AG04449 (cell line): ENCODE measurements at regions of chr19 and their contacts with region 1.

Region 1: GRCh38 chr19:16062789-16063188 is 13.5 kb upstream of the TPM4 start:
- DNase-seq: no peak
- H3K4me3 ChIP-seq: no peak overlapping the region
- CTCF ChIP-seq: peak; percentile 84

Region 2: DNA sequence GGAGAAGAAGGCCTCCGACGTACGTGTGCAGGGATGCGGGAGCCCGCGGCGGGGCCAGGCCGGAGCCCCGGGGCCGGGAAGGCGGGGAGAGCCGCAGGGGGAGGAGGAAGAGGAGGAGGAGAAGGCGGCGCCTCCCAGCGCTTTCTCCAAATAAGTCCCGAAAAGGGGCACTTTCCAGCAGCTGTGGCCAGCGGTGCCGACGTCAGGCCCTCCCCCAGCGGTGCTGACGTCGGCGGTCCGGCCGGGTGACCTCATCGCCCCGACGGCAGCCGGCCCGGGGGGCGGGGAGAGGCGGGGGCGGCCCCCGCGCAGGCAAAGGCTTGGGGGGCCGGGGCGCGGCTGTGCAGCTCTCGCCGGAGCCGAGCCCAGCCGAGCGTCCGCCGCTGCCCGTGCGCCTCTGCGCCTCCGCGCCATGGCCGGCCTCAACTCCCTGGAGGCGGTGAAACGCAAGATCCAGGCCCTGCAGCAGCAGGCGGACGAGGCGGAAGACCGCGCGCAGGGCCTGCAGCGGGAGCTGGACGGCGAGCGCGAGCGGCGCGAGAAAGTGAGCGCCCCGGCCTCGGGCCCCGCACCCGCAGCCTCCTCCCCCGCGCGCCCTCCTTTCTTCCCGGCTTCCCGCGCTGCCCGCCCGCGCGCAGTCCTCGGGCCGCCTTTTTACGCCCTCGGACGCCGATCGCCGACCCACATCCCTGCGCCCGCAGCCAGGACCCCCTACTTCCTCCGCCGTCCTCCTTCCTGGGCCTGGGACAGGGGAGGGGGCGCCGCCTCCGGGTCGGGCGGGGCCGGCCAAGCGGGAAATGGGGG is 13.6 kb after region 1 on chr19 and contains the start of gene TPM4:
- CTCF ChIA-PET with region 1: interaction called, 28 read pairs
- POLR2A ChIA-PET with region 1: interaction called, 35 read pairs
- DNase-seq: peak; percentile 79
- H3K4me3 ChIP-seq: peak within 1 kb of the TSS; percentile 97
- CTCF ChIP-seq: no peak